ENCODE measurements at regions of chr7 and their contacts with region 1.

Region 1: DNA sequence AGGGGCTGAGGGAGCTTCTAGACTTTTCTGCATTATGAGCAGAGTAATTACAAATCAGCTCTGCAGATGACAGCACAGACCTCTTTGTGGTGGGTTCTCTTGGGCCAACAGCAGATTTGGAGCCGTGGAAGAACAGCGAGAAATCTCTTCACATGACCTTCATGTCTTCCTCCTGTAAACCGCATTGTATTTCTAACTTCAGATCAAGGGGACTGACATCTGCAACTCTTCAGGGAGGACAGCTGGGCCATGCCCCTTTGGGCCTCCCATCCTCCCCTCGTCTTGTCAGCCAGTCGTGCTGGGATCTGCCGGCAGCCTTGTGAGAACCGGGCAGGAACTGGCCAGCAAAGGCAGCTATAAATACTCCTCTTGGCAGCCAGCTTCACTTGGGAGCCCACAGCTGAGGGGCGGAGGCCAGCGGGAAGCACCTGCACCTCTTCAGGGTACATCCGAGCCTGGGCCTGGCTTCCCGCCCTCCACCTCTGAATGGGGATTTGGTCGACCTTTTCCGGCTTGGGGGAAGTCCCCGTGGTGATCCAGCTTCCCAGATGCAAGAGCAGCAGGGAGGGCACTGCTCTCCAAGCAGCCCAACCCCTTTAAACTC is 54.7 kb downstream of the STEAP1B start:
- DNase-seq: peak; percentile 99
- H3K4me3 ChIP-seq: no peak overlapping the region
- H3K27ac ChIP-seq: peak overlapping the region; percentile 92
- H3K4me1 ChIP-seq: peaks cover 50% of the 10 kb centered on the region
- H3K27me3 ChIP-seq: no peaks in the 10 kb centered on the region
- CTCF ChIP-seq: no peak
- POLR2A ChIP-seq: peak; percentile 71

Region 2: DNA sequence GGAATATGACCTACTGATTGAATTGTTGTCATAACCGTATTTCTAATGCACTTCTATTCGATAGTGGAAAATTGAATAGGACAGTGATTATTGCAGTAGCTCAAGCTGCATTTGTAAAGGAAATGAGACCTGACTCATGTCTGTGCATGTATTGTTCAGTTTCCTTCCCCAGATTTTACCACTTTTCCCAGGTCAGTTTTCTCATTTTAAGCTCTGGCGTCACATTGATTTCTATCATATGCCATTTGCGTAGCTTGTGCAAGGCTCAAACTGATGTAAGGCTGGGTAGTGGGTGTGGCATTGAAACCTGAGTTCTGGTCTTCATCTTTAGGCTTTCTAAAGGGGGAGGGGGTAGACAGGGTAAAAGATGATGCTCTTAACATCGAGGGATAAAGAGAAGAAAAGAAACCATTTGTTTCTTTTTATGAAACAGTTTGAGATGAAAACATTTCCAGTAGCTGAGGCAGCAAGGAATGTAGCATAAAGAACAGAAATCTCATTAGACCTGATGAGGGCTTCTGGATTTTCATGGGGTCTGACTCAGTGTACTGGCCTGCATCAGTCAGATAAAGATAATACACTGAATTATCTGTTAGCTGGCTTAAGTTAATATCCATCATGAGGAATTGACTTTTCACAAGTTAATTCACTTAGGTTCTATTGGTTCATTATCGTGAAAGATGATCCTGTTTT is 317.3 kb before region 1 on chr7:
- CTCF ChIA-PET with region 1: interaction called, 5 read pairs
- POLR2A ChIA-PET with region 1: interaction called, 3 read pairs
- dilution Hi-C with region 1: loop called (anchors 25 kb)
- intact Hi-C with region 1: loop called (anchors 1 kb)
- DNase-seq: peak; percentile 97
- H3K4me3 ChIP-seq: no peak overlapping the region
- H3K27ac ChIP-seq: peak overlapping the region; percentile 91
- H3K4me1 ChIP-seq: peaks cover 55% of the 10 kb centered on the region
- H3K27me3 ChIP-seq: no peaks in the 10 kb centered on the region
- CTCF ChIP-seq: no peak
- POLR2A ChIP-seq: no peak

Region 3: DNA sequence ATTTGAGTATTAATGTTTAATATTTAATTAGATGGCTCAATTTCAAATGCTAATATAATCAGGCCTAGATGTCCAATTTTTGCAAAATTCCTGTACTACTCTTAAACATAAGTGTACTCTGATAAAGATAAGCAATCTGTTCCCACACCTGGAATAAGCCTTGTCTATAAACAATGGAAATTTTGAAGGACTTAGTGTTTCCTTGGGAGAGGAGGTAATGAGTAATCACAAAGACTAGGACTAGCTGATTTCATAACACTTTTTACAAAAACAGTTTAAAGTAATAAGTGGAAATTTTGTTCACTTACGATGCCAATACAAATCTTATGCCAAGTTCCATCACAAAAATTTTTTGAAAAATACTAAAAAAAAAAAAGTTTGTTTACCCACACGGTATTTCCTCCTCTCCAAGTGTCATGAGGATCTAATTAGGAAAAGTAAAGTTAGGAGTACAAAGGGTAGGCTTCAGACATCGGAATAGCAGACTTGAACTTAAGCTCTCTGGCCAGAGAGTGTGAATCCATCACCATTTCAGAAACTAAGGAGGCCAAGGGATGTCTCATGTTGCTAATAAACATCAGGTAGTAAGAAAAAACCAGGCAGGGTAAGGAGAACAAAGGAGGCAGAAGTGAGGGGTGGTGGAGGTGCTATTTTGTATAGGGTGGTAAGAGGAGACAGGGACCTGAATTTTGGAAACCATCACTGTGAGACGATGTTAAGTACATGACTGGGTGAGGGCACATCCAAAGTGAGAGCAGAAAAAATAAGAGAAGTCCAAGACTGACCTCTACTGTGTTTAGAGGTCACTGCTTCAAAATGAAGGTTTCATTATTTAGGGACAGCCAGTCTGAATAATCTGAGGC is 149.6 kb before region 1 on chr7:
- CTCF ChIA-PET with region 1: interaction called, 13 read pairs
- POLR2A ChIA-PET with region 1: no interaction called
- dilution Hi-C with region 1: no loop called
- intact Hi-C with region 1: loop called (anchors 1 kb)
- DNase-seq: peak; percentile 80
- H3K4me3 ChIP-seq: no peak overlapping the region
- H3K27ac ChIP-seq: peak overlapping the region; percentile 10
- H3K4me1 ChIP-seq: peaks cover 5% of the 10 kb centered on the region
- H3K27me3 ChIP-seq: no peaks in the 10 kb centered on the region
- CTCF ChIP-seq: peak in 1 of 2 donors; percentile 13
- POLR2A ChIP-seq: no peak

Region 4: DNA sequence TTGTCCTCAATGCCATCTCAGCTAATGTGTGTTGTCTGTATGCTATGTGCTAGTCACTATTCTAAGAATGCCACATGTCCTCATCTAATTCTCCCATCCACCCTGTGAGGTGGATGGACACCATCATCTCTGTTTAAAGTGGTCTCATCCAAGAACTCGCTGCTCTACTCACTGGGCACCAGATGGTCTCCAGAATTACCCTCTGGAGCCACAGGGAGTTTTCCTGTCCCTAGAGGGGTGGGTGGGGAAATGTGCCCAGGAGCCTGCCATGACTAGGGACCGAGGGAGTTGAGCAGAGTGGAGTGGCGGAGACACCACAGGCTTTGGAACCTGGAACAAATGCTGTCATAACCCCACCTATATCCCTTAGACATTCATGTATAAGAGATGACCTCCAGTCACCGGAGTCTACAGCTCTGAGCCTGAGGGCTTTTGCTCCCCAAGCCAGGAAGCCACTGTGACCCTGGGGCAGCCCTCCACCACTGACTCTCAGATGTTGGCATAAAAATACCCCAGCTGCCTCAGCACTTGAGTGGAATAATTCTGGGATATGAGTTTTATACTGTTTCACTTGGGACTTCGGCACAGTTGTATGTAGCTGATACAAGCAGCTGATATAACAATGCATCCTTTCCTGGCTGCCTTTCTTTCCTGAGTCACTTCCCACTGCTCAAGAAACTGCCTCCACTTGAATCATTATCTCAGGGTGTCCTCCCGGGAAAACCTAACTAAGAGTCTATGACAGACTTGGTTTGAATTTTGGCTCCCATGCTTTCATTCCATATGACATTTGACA is 26.8 kb before region 1 on chr7:
- CTCF ChIA-PET with region 1: interaction called, 4 read pairs
- POLR2A ChIA-PET with region 1: interaction called, 6 read pairs
- dilution Hi-C with region 1: no loop called
- intact Hi-C with region 1: loop called (anchors 1 kb)
- DNase-seq: peak; percentile 94
- H3K4me3 ChIP-seq: no peak overlapping the region
- H3K27ac ChIP-seq: peak overlapping the region; percentile 96
- H3K4me1 ChIP-seq: peaks cover 26% of the 10 kb centered on the region
- H3K27me3 ChIP-seq: no peaks in the 10 kb centered on the region
- CTCF ChIP-seq: no peak
- POLR2A ChIP-seq: no peak

Region 5: DNA sequence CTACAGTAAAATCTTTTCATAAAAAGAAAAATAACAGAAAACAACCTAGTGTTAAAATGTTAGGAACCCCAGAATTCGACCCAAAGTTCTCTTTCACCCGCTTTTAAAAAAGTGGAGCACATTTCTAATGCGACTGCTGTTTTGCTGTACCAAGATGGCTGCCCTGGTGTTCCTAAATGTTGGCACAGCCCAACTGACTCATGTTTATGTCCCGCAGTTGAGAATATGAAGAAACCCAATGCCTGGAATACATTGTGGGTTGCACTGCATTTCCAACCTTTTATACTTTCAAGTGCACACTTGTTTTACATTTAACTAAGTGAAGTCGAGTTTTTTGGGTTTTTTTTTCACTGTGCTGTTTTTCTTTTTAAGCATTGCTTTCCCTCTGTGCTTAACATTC is 53.8 kb after region 1 on chr7:
- CTCF ChIA-PET with region 1: interaction called, 3 read pairs
- POLR2A ChIA-PET with region 1: no interaction called
- dilution Hi-C with region 1: no loop called
- intact Hi-C with region 1: loop called (anchors 1 kb)
- DNase-seq: no peak
- H3K4me3 ChIP-seq: peak overlapping the region in 2 of 3 experiments; percentile 40 to 43
- H3K27ac ChIP-seq: peak overlapping the region; percentile 90
- H3K4me1 ChIP-seq: peaks cover 39% of the 10 kb centered on the region
- H3K27me3 ChIP-seq: no peaks in the 10 kb centered on the region
- CTCF ChIP-seq: no peak
- POLR2A ChIP-seq: peak; percentile 43

Measured in endothelial cell of umbilical vein (primary cell).